Posterior cingulate gyrus (tissue), 11 donors: ENCODE measurements at regions of chr1 and their contacts with region 1.

Region 1: DNA sequence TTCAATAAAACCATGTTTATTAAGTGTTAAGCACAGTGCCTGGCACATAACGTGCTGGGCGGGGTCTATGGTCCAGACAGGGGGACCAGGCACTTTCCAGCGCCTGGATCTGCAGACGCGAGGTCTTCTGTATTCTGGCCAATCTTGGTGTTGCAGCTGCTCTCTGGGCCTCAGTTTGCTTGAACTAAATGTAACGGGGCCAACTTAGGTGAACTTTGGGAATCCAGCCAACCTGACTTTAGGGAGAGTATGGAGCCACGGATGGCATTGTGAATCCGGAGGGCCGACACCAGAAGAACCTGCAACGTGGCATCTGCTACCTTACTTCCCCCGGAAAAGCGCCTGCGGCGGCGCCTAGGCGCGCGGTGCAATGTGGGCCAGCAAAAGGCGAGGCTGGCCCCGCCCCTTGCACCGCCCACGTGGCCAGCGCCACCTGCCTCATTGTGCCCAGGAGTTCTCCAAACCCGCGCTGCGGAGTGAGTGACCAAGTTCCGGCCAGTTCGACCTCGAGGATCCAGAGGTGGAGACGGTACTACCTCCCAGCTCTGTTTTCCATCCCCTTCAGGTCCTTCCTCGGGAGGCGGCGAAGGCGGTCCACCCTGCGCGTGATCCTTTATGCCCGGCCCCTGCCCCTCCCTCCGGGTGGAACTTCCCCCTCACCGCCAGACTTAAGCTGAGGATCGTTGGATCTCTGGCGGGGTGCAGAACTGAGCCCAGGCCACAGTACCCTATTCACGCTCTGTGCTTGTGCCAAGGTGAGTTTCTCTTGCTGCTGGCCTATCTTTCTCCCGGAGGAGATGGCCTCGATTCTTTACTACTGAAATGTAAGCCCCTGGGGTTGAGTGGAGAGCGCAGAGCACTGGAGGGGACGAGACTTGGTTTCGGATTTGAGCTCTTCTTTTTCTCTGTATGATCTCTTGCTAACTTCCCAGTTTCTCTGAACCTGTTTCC is at the start of gene AKR1A1:
- DNase-seq: peak; percentile 77 to 98 (median 86)

Region 2: GRCh38 chr1:45499415-45499769 is 51.3 kb before region 1 on chr1:
- intact Hi-C with region 1: loop called (anchors 2 kb)
- DNase-seq: peak in 1 of 10 donors; percentile 59

Region 3: DNA sequence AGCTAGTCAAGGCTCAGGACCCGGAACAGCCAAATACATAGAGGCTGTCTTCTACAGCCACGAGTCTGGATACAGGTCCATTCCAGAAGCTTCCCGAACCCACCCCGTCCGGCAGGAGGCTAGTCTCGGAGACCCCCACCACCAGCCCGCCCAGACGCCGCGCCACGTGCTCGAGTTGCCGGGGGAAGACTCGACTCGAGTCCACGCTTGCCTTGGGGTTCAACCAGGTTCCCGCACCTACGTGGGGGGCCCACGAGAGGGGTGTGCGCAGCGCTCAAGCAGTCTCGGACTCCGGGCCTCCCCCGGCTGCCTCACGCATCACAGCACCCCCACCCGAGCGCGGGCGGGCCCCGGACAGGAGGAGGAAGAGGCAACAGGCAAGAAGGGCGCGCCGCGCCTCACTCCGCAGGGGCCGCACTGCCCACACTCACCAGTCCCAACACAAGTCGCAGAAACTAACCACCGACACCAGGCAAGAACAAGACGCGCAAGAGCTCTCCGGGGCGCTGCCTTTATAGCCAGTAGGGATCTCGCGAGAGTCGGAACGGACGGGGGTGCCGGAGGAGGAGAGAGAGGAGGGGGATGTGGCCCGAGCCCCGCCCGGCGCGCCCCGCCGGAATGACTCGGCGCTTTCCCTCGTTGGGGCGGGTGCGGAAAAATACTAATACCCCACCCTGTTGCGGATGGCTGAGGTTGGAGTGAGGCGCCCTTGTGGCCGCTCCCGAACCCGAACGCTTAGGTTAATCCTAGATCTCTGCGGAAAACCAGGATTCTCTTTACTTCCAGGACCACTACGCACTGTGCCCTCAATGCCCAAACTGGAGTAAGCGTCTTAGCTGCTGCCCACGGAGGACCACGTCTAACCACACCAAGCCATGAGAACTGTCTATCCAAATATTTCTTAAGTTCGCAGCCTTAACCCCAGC is 29.0 kb before region 1 on chr1 and contains the start of gene PRDX1:
- intact Hi-C with region 1: loop called (anchors 2 kb)
- DNase-seq: peak; percentile 95 to 100 (median 98)